Naive thymus-derived CD4-positive, alpha-beta T cell (primary cell): ENCODE measurements at regions of chr4 and their contacts with region 1.

Region 1: GRCh38 chr4:113837397-113837796 is 75.9 kb upstream of the CAMK2D start:
- DNase-seq: no peak
- ATAC-seq: peak; percentile 81
- H3K4me3 ChIP-seq: no peak overlapping the region
- H3K4me3 Mint-ChIP-seq: no peak overlapping the region
- H3K27ac ChIP-seq: no peak overlapping the region
- H3K27ac Mint-ChIP-seq: no peak overlapping the region
- H3K4me1 ChIP-seq: no peaks in the 10 kb centered on the region
- H3K4me1 Mint-ChIP-seq: peaks cover 0 to 16% (median 13%) of the 10 kb centered on the region in 7 donors
- H3K27me3 ChIP-seq: no peaks in the 10 kb centered on the region
- H3K27me3 Mint-ChIP-seq: no peaks in the 10 kb centered on the region

Region 2: GRCh38 chr4:113666386-113667114 is 170.8 kb before region 1 on chr4:
- CTCF ChIA-PET with region 1: no interaction called
- POLR2A ChIA-PET with region 1: no interaction called
- intact Hi-C with region 1: no loop called
- DNase-seq: no peak
- ATAC-seq: no peak
- H3K4me3 ChIP-seq: no peak overlapping the region
- H3K4me3 Mint-ChIP-seq: no peak overlapping the region
- H3K27ac ChIP-seq: no peak overlapping the region
- H3K27ac Mint-ChIP-seq: peak overlapping the region in 1 of 9 donors; percentile 36
- H3K4me1 ChIP-seq: no peaks in the 10 kb centered on the region
- H3K4me1 Mint-ChIP-seq: peaks cover 0 to 22% (median 4%) of the 10 kb centered on the region in 7 donors
- H3K27me3 ChIP-seq: no peaks in the 10 kb centered on the region
- H3K27me3 Mint-ChIP-seq: no peaks in the 10 kb centered on the region

Region 3: DNA sequence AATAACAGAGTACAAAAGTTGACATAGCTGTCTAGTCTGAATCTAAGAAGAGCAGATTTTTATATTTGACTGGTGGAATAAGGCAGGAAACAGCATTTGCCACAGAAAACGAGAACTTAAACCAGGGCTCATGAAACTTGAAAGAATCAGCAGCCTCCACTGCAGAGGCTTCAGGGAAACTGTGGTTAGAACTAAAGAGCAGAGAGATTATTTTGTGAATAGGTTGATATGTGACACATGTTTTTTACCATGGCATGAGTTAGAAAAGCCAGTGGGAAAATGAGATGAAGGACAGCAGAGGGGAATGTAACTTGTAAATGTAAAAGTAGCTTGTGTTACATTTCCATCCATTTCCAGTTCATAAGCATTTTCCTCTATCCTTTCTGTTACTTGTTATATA is 12.1 kb before region 1 on chr4:
- CTCF ChIA-PET with region 1: no interaction called
- POLR2A ChIA-PET with region 1: interaction called, 3 read pairs
- intact Hi-C with region 1: loop called in 1 of 2 experiments (anchors 2 kb)
- DNase-seq: peak in 7 of 9 donors; percentile 10 to 63 (median 52)
- ATAC-seq: peak; percentile 77
- H3K4me3 ChIP-seq: no peak overlapping the region
- H3K4me3 Mint-ChIP-seq: peak overlapping the region in 9 of 10 donors; percentile 3 to 70 (median 57)
- H3K27ac ChIP-seq: peak overlapping the region; percentile 26
- H3K27ac Mint-ChIP-seq: peak overlapping the region in 8 of 9 donors; percentile 5 to 88 (median 38)
- H3K4me1 ChIP-seq: peaks cover 7 to 34% of the 10 kb centered on the region in 2 donors
- H3K4me1 Mint-ChIP-seq: peaks cover 29 to 52% (median 47%) of the 10 kb centered on the region in 7 donors
- H3K27me3 ChIP-seq: no peaks in the 10 kb centered on the region
- H3K27me3 Mint-ChIP-seq: peaks cover 0 to 5% (median 0%) of the 10 kb centered on the region in 5 donors

Region 4: GRCh38 chr4:114364857-114365256 is 527.5 kb after region 1 on chr4:
- CTCF ChIA-PET with region 1: no interaction called
- POLR2A ChIA-PET with region 1: no interaction called
- intact Hi-C with region 1: no loop called
- DNase-seq: no peak
- ATAC-seq: no peak
- H3K4me3 ChIP-seq: no peak overlapping the region
- H3K4me3 Mint-ChIP-seq: no peak overlapping the region
- H3K27ac ChIP-seq: no peak overlapping the region
- H3K27ac Mint-ChIP-seq: no peak overlapping the region
- H3K4me1 ChIP-seq: no peaks in the 10 kb centered on the region
- H3K4me1 Mint-ChIP-seq: no peaks in the 10 kb centered on the region
- H3K27me3 ChIP-seq: no peaks in the 10 kb centered on the region
- H3K27me3 Mint-ChIP-seq: peaks cover 0 to 16% (median 3%) of the 10 kb centered on the region in 5 donors